Naive thymus-derived CD4-positive, alpha-beta T cell (primary cell): ENCODE measurements at regions of chr6 and their contacts with region 1.

Region 1: DNA sequence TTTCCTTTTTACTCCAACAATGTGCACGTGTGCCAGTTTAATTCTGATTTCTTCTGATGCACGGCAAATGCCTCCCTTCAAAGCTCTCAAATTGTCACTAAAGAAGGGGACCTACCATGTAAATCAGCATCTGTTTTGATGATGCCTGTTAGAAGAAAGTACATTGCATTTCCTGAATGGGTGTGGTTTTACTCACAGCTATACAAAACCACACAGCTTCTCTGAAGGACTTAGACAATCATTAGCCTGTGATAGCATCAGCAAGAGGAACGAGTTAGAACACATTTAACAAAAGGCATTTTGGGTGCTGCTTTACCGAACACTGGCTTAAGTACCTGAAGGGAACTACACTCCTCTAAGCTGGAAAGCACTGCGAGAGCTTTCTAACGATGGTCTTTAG is 109.4 kb downstream of the ATXN1 start:
- DNase-seq: peak in 7 of 9 donors; percentile 4 to 55 (median 27)
- ATAC-seq: peak; percentile 88
- H3K4me3 ChIP-seq: no peak overlapping the region
- H3K4me3 Mint-ChIP-seq: peak overlapping the region in 3 of 10 donors; percentile 33 to 68 (median 41)
- H3K27ac ChIP-seq: no peak overlapping the region
- H3K27ac Mint-ChIP-seq: peak overlapping the region in 5 of 9 donors; percentile 0 to 86 (median 12)
- H3K4me1 ChIP-seq: peaks cover 11 to 48% of the 10 kb centered on the region in 2 donors
- H3K4me1 Mint-ChIP-seq: peaks cover 20 to 63% (median 24%) of the 10 kb centered on the region in 7 donors
- H3K27me3 ChIP-seq: no peaks in the 10 kb centered on the region
- H3K27me3 Mint-ChIP-seq: no peaks in the 10 kb centered on the region

Region 2: GRCh38 chr6:16514249-16514648 is 137.6 kb before region 1 on chr6:
- CTCF ChIA-PET with region 1: no interaction called
- POLR2A ChIA-PET with region 1: no interaction called
- intact Hi-C with region 1: loop called in 1 of 2 experiments (anchors 10 kb)
- DNase-seq: peak in 6 of 9 donors; percentile 16 to 31 (median 24)
- ATAC-seq: peak; percentile 59
- H3K4me3 ChIP-seq: no peak overlapping the region
- H3K4me3 Mint-ChIP-seq: peak overlapping the region in 1 of 10 donors; percentile 41
- H3K27ac ChIP-seq: no peak overlapping the region
- H3K27ac Mint-ChIP-seq: peak overlapping the region in 7 of 9 donors; percentile 10 to 56 (median 40)
- H3K4me1 ChIP-seq: peaks cover 14 to 29% of the 10 kb centered on the region in 2 donors
- H3K4me1 Mint-ChIP-seq: peaks cover 29 to 73% (median 58%) of the 10 kb centered on the region in 7 donors
- H3K27me3 ChIP-seq: no peaks in the 10 kb centered on the region
- H3K27me3 Mint-ChIP-seq: no peaks in the 10 kb centered on the region

Region 3: GRCh38 chr6:16669227-16669626 is 17.4 kb after region 1 on chr6:
- CTCF ChIA-PET with region 1: no interaction called
- POLR2A ChIA-PET with region 1: no interaction called
- intact Hi-C with region 1: loop called in 1 of 2 experiments (anchors 1 kb)
- DNase-seq: peak in 1 of 9 donors; percentile 69
- ATAC-seq: peak; percentile 67
- H3K4me3 ChIP-seq: no peak overlapping the region
- H3K4me3 Mint-ChIP-seq: peak overlapping the region in 1 of 10 donors; percentile 80
- H3K27ac ChIP-seq: no peak overlapping the region
- H3K27ac Mint-ChIP-seq: peak overlapping the region in 2 of 9 donors; percentile 43 to 90
- H3K4me1 ChIP-seq: peaks cover 0 to 31% of the 10 kb centered on the region in 2 donors
- H3K4me1 Mint-ChIP-seq: peaks cover 17 to 52% (median 28%) of the 10 kb centered on the region in 7 donors
- H3K27me3 ChIP-seq: no peaks in the 10 kb centered on the region
- H3K27me3 Mint-ChIP-seq: no peaks in the 10 kb centered on the region

Region 4: GRCh38 chr6:16684896-16685554 is 33.2 kb after region 1 on chr6:
- CTCF ChIA-PET with region 1: no interaction called
- POLR2A ChIA-PET with region 1: no interaction called
- intact Hi-C with region 1: loop called in 1 of 2 experiments (anchors 5 kb)
- DNase-seq: peak in 3 of 9 donors; percentile 14 to 85 (median 52)
- ATAC-seq: peak; percentile 70
- H3K4me3 ChIP-seq: no peak overlapping the region
- H3K4me3 Mint-ChIP-seq: peak overlapping the region in 1 of 10 donors; percentile 54
- H3K27ac ChIP-seq: no peak overlapping the region
- H3K27ac Mint-ChIP-seq: peak overlapping the region in 3 of 9 donors; percentile 23 to 63 (median 30)
- H3K4me1 ChIP-seq: peaks cover 0 to 32% of the 10 kb centered on the region in 2 donors
- H3K4me1 Mint-ChIP-seq: peaks cover 4 to 70% (median 18%) of the 10 kb centered on the region in 7 donors
- H3K27me3 ChIP-seq: no peaks in the 10 kb centered on the region
- H3K27me3 Mint-ChIP-seq: no peaks in the 10 kb centered on the region